Activated CD8-positive, alpha-beta T cell treated with anti-CD3 and anti-CD28 coated beads for 36 hours (primary cell): ENCODE measurements at regions of chr17 and their contacts with region 1.

Region 1: GRCh38 chr17:42819944-42820535 is 4.0 kb downstream of the BECN1 start:
- DNase-seq: peak; percentile 90
- ATAC-seq: peak; percentile 50
- H3K4me3 Mint-ChIP-seq: no peak overlapping the region
- H3K27ac Mint-ChIP-seq: peak overlapping the region; percentile 41
- H3K4me1 Mint-ChIP-seq: peaks cover 34% of the 10 kb centered on the region
- H3K27me3 Mint-ChIP-seq: no peaks in the 10 kb centered on the region
- CTCF ChIP-seq: peak; percentile 82

Region 2: DNA sequence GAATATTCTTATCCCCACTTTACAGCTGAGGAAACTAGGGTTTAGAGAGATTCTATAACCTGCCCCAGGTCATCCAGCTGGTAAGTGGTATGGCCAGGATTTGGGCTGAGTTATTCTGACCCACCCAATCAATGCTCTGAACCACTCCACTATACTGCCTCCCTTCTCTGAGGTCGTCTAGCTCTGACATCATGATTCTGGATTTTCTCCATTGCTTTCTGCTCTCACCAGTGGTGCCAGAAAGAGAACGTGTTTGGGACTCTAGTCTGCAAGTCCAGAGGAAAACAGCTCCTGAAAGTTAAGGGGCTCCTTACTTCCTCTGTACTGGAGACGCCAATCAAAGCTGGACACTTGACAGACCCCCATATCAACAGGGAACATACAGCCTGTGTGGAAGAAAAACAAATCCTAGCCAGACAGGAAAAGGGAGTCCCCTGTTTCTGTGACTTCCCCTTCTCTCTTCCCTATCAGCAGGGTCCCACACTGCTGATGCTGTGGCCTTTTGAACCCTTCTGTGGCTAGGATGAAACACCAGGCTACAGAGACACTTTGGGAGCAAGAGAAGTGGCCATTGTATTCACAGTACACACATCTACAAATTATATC is 69.2 kb before region 1 on chr17:
- CTCF ChIA-PET with region 1: no interaction called
- POLR2A ChIA-PET with region 1: no interaction called
- intact Hi-C with region 1: no loop called
- DNase-seq: no peak
- ATAC-seq: no peak
- H3K4me3 Mint-ChIP-seq: no peak overlapping the region
- H3K27ac Mint-ChIP-seq: no peak overlapping the region
- H3K4me1 Mint-ChIP-seq: no peaks in the 10 kb centered on the region
- H3K27me3 Mint-ChIP-seq: peaks cover 15% of the 10 kb centered on the region
- CTCF ChIP-seq: no peak

Region 3: GRCh38 chr17:42773290-42774035 is 46.6 kb before region 1 on chr17 and contains the start of gene VPS25:
- CTCF ChIA-PET with region 1: interaction called, 10 read pairs
- POLR2A ChIA-PET with region 1: interaction called, 5 read pairs
- intact Hi-C with region 1: no loop called
- DNase-seq: peak; percentile 79
- ATAC-seq: peak; percentile 96
- H3K4me3 Mint-ChIP-seq: peak within 1 kb of the TSS; percentile 98
- H3K27ac Mint-ChIP-seq: peak within 1 kb of the TSS; percentile 95
- H3K4me1 Mint-ChIP-seq: peaks cover 21% of the 10 kb centered on the region
- H3K27me3 Mint-ChIP-seq: no peaks in the 10 kb centered on the region
- CTCF ChIP-seq: no peak
- total RNA-seq, gene VPS25: 63.4 to 67.2 TPM

Region 4: DNA sequence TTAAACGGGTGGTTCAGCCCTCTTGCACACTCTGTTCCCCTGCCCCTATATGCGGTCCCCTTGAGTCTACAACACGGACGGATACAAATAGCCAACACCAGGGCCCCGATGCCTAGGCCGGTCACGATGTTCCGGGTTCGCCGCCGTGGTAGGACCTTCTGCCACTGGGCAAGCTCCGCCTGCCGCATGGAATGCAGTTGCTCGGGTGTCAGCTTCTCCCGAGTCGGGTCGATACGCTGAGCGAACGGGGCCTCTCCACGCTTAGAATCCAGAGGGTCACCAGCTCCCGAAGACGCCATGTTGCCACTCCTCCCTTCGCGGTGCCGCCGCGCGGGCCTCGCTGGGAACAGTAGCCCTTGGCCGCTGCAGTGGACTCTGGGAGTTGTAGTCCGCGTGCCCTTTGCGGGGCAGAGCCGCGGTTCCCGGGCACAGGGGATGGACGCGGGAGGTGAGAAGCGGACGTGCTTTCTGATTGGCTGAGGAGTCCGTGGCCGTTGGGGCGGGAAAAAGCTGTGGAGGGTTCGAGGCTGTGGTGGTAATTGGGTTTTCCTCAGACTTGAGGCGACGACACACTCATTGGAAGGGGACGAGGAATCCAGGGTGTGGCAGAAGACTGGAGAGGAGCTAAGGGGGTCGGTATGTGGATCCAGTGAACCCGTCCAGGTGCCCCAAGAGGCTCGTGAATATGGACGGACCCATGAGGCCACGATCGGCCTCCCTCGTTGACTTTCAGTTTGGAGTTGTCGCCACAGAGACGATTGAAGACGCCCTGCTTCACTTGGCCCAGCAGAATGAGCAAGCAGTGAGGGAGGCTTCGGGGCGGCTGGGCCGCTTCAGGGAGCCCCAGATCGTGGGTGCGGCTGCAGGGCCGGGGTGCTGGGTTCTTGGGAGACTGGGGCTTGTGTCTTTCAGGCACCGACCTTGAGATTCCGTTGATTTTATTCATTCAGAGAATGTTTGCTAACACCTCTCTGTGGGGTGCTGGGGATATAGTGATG is 21.4 kb before region 1 on chr17 and contains the starts of genes CNTD1 and COA3:
- CTCF ChIA-PET with region 1: interaction called, 36 read pairs
- POLR2A ChIA-PET with region 1: no interaction called
- intact Hi-C with region 1: no loop called
- DNase-seq: peak; percentile 91
- ATAC-seq: peak; percentile 100
- H3K4me3 Mint-ChIP-seq: peak within 1 kb of the TSS; percentile 92
- H3K27ac Mint-ChIP-seq: peak within 1 kb of the TSS; percentile 78
- H3K4me1 Mint-ChIP-seq: peaks cover 16% of the 10 kb centered on the region
- H3K27me3 Mint-ChIP-seq: no peaks in the 10 kb centered on the region
- CTCF ChIP-seq: no peak
- total RNA-seq, gene CNTD1: 0.23 TPM in 1 of 2 experiments, not detected in the other
- total RNA-seq, gene COA3: 24.9 to 27.9 TPM

Region 5: DNA sequence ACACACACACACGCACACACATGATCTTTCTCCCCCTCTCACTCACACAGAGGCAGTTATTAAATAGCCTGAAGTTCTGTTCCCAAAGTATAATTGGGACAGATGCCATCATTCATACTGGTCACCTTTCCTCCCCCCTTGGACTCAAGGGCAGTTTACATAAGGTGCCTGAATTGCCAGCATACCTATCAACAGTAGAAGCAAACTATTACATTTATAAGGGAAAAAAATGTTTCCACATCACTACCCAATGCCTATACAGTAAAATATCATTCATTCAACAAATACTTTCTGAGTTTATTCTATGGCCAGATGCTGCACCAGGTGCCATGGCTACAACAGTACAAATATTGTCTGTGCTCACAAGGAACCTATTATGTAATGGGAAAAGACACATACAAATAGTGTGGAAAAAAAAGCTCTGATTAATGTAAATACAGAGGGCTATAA is 15.1 kb before region 1 on chr17:
- CTCF ChIA-PET with region 1: interaction called, 36 read pairs
- POLR2A ChIA-PET with region 1: interaction called, 4 read pairs
- intact Hi-C with region 1: no loop called
- DNase-seq: no peak
- ATAC-seq: no peak
- H3K4me3 Mint-ChIP-seq: no peak overlapping the region
- H3K27ac Mint-ChIP-seq: no peak overlapping the region
- H3K4me1 Mint-ChIP-seq: no peaks in the 10 kb centered on the region
- H3K27me3 Mint-ChIP-seq: no peaks in the 10 kb centered on the region
- CTCF ChIP-seq: no peak

Region 6: DNA sequence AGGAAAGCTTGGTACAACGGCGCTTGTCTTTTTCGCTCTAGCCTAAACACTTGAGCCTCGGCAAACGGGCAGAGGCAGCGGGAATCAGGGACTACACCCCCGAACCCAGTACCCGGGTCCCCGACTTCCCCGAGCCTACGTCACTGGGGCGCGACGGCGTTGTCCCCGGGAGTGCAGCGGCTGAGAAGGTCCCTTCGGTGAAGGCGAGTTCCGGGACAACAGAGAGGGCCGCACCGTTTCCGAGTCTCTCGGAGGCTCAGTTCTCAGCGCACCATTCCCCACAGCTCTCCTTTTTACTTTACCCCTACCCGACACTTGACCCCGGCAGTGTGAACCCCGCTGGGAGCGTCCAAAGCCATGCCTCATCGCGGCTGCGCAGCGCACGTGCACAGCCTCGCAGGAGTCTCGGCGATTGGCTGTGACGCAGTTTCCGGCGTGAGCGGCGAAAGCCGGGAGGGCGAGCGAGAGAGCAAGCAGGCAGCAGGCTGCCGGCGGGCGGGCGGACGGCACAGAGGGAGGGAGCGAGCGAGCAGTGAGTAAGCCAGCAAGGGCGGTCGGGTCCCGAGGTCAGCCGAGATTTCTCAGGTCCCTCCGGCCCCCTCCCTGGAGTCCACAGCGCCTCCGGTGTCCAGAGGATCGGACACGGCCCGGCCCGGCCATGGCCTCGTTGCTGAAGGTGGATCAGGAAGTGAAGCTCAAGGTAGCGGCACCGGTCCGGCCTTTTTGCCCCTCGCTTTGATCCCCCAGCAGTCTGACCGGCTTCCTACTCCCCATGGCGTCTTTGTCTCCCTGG is 13.1 kb after region 1 on chr17 and contains the start of gene PSME3:
- CTCF ChIA-PET with region 1: interaction called, 35 read pairs
- POLR2A ChIA-PET with region 1: interaction called, 19 read pairs
- intact Hi-C with region 1: no loop called
- DNase-seq: peak; percentile 92
- ATAC-seq: peak; percentile 89
- H3K4me3 Mint-ChIP-seq: peak within 1 kb of the TSS; percentile 94
- H3K27ac Mint-ChIP-seq: peak within 1 kb of the TSS; percentile 99
- H3K4me1 Mint-ChIP-seq: peaks cover 19% of the 10 kb centered on the region
- H3K27me3 Mint-ChIP-seq: no peaks in the 10 kb centered on the region
- CTCF ChIP-seq: no peak
- total RNA-seq, gene PSME3: 124 to 132 TPM

Region 7: DNA sequence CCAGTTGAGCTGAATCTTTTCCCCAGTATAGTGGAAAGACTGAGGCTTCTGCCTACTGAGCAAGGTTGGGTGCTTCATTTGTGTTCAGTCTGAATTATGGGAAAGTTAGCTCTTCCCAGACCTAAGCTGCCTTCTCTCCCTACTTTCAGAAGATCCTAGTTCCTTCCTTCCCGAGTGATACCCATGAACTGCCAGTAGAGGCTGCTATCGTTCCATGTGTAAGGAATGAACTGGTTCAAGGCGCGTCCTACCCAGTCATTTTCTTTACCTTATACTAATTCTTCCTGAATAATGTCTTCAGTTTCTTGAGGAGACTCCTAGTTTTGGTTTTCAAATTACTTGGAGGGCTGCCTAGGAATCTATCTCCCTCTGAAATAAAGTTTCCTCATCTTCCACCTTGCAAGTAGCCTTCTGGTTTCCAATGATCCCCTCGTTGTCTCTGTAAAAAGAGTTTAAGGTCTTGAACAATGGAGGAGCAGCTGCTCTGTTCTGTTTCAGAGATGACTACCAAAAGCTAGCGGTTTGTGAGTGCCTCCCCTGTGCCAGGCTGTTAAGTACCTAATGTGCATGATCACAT is 23.4 kb after region 1 on chr17:
- CTCF ChIA-PET with region 1: interaction called, 13 read pairs
- POLR2A ChIA-PET with region 1: interaction called, 4 read pairs
- intact Hi-C with region 1: no loop called
- DNase-seq: no peak
- ATAC-seq: peak; percentile 29
- H3K4me3 Mint-ChIP-seq: no peak overlapping the region
- H3K27ac Mint-ChIP-seq: no peak overlapping the region
- H3K4me1 Mint-ChIP-seq: peaks cover 21% of the 10 kb centered on the region
- H3K27me3 Mint-ChIP-seq: no peaks in the 10 kb centered on the region
- CTCF ChIP-seq: no peak

Region 8: GRCh38 chr17:42928714-42929496 is 108.9 kb after region 1 on chr17:
- CTCF ChIA-PET with region 1: interaction called, 15 read pairs
- POLR2A ChIA-PET with region 1: interaction called, 4 read pairs
- intact Hi-C with region 1: no loop called
- DNase-seq: peak; percentile 78
- ATAC-seq: peak; percentile 89
- H3K4me3 Mint-ChIP-seq: no peak overlapping the region
- H3K27ac Mint-ChIP-seq: peak overlapping the region; percentile 18
- H3K4me1 Mint-ChIP-seq: peaks cover 12% of the 10 kb centered on the region
- H3K27me3 Mint-ChIP-seq: peaks cover 3% of the 10 kb centered on the region
- CTCF ChIP-seq: peak; percentile 71